ENCODE measurements at regions of chr4 and their contacts with region 1.

Region 1: GRCh38 chr4:123396307-123397143 is at the start of gene SPRY1:
- DNase-seq: peak; percentile 84
- H3K4me3 ChIP-seq: peak within 1 kb of the TSS; percentile 75
- H3K27ac ChIP-seq: no peak within 1 kb of the TSS; the same call in 1 of the 2 replicates
- H3K4me1 ChIP-seq: peaks cover 11% of the 10 kb centered on the region; the same call in 1 of the 2 replicates
- H3K27me3 ChIP-seq: no peaks in the 10 kb centered on the region
- total RNA-seq, gene SPRY1: 1.3 and 6.4 TPM in 2 replicates

Region 2: GRCh38 chr4:122879001-122879400 is 517.5 kb before region 1 on chr4:
- in situ Hi-C with region 1: no loop called
- DNase-seq: no peak
- H3K4me3 ChIP-seq: no peak overlapping the region
- H3K27ac ChIP-seq: peak overlapping the region; percentile 39
- H3K4me1 ChIP-seq: peaks cover 77% of the 10 kb centered on the region
- H3K27me3 ChIP-seq: no peaks in the 10 kb centered on the region

Region 3: GRCh38 chr4:123017636-123018395 is 378.7 kb before region 1 on chr4:
- in situ Hi-C with region 1: no loop called
- DNase-seq: peak; percentile 81
- H3K4me3 ChIP-seq: no peak overlapping the region
- H3K27ac ChIP-seq: peak overlapping the region; percentile 34; the same call in 1 of the 2 replicates
- H3K4me1 ChIP-seq: peaks cover 32% of the 10 kb centered on the region
- H3K27me3 ChIP-seq: no peaks in the 10 kb centered on the region

Region 4: GRCh38 chr4:123127218-123127617 is 269.3 kb before region 1 on chr4:
- in situ Hi-C with region 1: loop called (anchors 25 kb)
- DNase-seq: peak; percentile 48
- H3K4me3 ChIP-seq: no peak overlapping the region
- H3K27ac ChIP-seq: no peak overlapping the region
- H3K4me1 ChIP-seq: peaks cover 10% of the 10 kb centered on the region
- H3K27me3 ChIP-seq: no peaks in the 10 kb centered on the region

Region 5: GRCh38 chr4:123325241-123325681 is 71.3 kb before region 1 on chr4:
- in situ Hi-C with region 1: no loop called
- DNase-seq: no peak
- H3K4me3 ChIP-seq: no peak overlapping the region
- H3K27ac ChIP-seq: no peak overlapping the region
- H3K4me1 ChIP-seq: no peaks in the 10 kb centered on the region
- H3K27me3 ChIP-seq: no peaks in the 10 kb centered on the region

Region 6: DNA sequence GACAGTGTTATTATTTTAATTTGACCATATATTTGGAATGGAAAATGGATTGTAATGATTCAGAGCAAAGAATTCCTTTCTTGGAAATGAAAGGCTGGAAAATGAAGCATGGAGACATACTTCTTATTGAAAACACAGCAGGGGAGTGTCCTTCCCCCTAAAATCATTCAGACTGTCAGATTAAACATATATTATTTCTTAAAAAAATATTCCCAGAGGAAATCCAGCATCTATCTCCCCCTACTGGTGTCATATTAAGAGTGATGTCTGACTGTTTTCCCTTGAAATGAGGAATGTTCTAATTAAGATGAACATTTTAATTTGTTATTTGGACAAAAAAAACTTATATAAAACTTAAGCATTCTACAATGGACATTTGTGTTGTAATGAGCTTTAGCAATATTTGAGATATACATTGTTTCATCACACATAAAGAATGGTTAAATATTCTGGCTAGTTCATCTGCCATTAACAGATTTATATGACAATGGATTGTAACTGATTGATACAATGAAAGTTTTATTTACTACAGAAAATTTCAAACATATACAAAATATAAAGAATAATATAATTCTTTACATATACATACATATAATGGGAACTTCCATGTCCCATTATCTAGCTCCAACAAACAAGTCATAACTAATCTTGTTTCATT is 264.7 kb after region 1 on chr4:
- in situ Hi-C with region 1: loop called (anchors 10 kb)
- DNase-seq: peak; percentile 36
- H3K4me3 ChIP-seq: no peak overlapping the region
- H3K27ac ChIP-seq: no peak overlapping the region
- H3K4me1 ChIP-seq: no peaks in the 10 kb centered on the region
- H3K27me3 ChIP-seq: no peaks in the 10 kb centered on the region

Region 7: GRCh38 chr4:124105212-124105611 is 708.7 kb after region 1 on chr4:
- in situ Hi-C with region 1: loop called (anchors 10 kb)
- DNase-seq: peak; percentile 54
- H3K4me3 ChIP-seq: no peak overlapping the region
- H3K27ac ChIP-seq: no peak overlapping the region
- H3K4me1 ChIP-seq: no peaks in the 10 kb centered on the region
- H3K27me3 ChIP-seq: no peaks in the 10 kb centered on the region

Measured in GM23248 (cell line).